ENCODE measurements at regions of chr15 and their contacts with region 1.

Region 1: DNA sequence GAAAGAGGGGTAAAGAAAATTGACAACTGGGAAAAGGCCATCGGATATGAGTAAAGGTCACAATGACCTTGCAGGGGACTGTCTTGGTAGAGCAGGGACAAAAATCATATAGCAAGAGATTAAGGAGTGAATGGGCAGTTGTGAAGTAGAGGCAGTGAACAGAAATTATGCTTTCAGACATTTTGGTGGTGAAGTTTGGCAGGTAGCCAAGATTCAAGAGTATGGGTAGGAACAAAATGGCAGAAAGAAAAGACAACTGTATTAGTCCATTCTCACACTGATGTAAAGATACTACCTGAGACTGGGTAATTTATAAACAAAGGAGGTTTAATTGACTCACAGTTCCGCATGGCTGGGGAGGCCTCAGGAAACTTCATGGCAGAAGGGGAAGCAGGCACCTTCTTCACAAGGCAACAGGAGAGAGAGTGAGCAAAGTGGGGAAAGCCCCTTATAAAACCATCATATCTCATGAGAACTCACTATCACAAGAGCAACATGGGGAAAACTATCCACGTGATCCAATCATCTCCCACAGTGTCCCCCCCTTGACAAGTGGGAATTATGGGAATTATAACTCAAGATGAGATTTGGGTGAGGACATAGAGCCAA is 84.0 kb downstream of the CGNL1 start:
- DNase-seq: no peak
- H3K4me3 ChIP-seq: no peak overlapping the region
- H3K27ac ChIP-seq: no peak overlapping the region
- H3K4me1 ChIP-seq: peaks cover 0 to 8% (median 0%) of the 10 kb centered on the region in 4 donors
- H3K27me3 ChIP-seq: no peaks in the 10 kb centered on the region
- CTCF ChIP-seq: no peak
- EP300 ChIP-seq: no peak
- POLR2A ChIP-seq: no peak

Region 2: DNA sequence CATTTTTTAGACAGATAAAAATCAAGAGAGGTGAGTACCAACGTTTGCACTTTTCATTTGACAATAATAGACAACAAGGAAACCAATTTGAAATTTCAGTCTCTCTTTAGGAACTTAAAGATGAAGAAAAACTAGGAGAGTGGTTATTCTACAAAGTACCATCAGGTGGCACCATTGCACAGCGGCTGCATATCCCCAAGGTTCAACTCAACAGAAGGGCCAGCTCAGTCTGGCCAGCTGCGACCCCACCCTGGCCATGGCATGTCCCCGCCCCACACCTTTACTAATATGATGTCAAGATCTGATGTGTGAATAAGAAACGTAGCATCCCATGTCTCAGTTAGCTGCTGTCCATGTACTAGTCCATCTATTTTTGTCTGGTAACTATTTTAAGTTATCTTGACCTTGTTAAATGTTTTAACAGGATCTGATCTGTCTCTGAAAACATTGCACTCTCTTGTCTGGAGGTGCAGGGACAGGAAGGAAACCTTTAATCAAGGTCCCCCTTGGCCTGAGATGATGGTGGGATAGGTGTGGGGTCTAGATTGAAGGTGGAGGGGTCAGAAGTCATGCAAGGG is 119.5 kb before region 1 on chr15:
- intact Hi-C with region 1: loop called (anchors 2 kb)
- DNase-seq: no peak
- H3K4me3 ChIP-seq: no peak overlapping the region
- H3K27ac ChIP-seq: no peak overlapping the region
- H3K4me1 ChIP-seq: peaks cover 9 to 10% (median 10%) of the 10 kb centered on the region in 4 donors
- H3K27me3 ChIP-seq: no peaks in the 10 kb centered on the region
- CTCF ChIP-seq: peak; percentile 85 to 90 (median 85)
- EP300 ChIP-seq: no peak
- POLR2A ChIP-seq: no peak

Region 3: GRCh38 chr15:57427367-57427821 is 32.9 kb before region 1 on chr15:
- intact Hi-C with region 1: no loop called
- DNase-seq: no peak
- H3K4me3 ChIP-seq: no peak overlapping the region
- H3K27ac ChIP-seq: no peak overlapping the region
- H3K4me1 ChIP-seq: peaks cover 18 to 23% (median 20%) of the 10 kb centered on the region in 4 donors
- H3K27me3 ChIP-seq: no peaks in the 10 kb centered on the region
- CTCF ChIP-seq: no peak
- EP300 ChIP-seq: no peak
- POLR2A ChIP-seq: no peak

Region 4: DNA sequence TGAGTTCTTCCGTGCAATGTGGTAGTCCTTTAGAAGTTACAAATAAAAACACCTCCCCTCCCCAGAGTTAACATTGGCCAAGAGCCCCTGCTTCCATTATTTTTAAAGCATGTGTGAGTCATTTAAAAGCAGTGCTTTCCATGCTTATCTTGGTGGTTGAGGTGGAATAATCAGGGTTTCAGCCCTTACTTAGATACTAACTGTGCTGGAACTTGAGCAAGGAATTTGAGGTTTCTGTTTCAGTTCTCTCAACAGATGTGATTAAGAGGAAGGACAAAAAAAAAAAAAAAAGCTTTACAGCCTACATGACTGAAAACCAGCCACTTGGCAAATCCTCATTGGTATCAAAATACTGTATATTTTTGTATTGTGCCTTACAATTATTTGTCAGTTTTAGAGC is 19.5 kb before region 1 on chr15:
- intact Hi-C with region 1: loop called (anchors 2 kb)
- DNase-seq: no peak
- H3K4me3 ChIP-seq: no peak overlapping the region
- H3K27ac ChIP-seq: no peak overlapping the region
- H3K4me1 ChIP-seq: peaks cover 0 to 5% (median 2%) of the 10 kb centered on the region in 4 donors
- H3K27me3 ChIP-seq: no peaks in the 10 kb centered on the region
- CTCF ChIP-seq: no peak
- EP300 ChIP-seq: no peak
- POLR2A ChIP-seq: no peak

Measured in esophagus muscularis mucosa (tissue), 4 donors.